Prostate gland (tissue), 2 donors: ENCODE measurements at regions of chr17 and their contacts with region 1.

Region 1: DNA sequence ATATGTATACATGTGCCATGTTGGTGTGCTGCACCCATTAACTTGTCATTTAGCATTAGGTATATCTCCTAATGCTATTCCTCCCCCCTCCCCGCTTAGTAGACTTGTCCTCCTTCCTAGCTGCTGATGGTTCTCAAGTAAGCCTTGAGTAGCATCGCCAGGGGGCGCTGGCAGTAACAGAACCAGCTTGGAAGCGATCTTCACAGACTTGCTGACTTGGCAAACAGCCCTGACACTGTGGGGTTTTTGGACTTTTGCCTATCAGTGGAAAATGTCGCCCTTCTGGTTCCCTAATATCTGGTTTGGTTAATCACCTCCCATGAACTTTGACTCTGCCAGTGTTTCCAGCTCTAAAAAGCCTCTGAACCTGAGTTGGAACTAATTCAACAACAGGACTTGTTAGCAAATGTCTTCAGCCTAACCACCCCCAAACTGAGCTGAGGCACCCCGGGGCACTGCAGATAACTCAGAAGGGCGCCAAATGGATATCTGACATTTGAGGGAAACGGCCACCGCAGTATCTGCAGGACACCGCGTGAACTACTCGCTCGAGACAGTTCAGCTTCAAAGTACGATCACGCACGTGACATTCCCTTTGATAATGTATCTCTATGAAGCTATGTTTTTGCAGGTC is 15.4 kb upstream of the SPATA32 start:
- DNase-seq: peak; percentile 93
- H3K4me3 ChIP-seq: no peak overlapping the region
- H3K27ac ChIP-seq: peak overlapping the region; percentile 7 to 61
- H3K4me1 ChIP-seq: peaks cover 5% of the 10 kb centered on the region
- H3K27me3 ChIP-seq: no peaks in the 10 kb centered on the region
- CTCF ChIP-seq: peak; percentile 62 to 94 (median 88)
- POLR2A ChIP-seq: no peak

Region 2: GRCh38 chr17:44758414-44759085 is 518.8 kb before region 1 on chr17 and contains the start of gene ADAM11:
- intact Hi-C with region 1: no loop called
- DNase-seq: no peak
- H3K4me3 ChIP-seq: peak within 1 kb of the TSS; percentile 31 to 42
- H3K27ac ChIP-seq: no peak within 1 kb of the TSS
- H3K4me1 ChIP-seq: peaks cover 4% of the 10 kb centered on the region
- H3K27me3 ChIP-seq: peaks cover 2% of the 10 kb centered on the region
- CTCF ChIP-seq: no peak
- POLR2A ChIP-seq: no peak
- total RNA-seq, gene ADAM11: 0.64 to 3.5 TPM

Region 3: GRCh38 chr17:45218895-45219661 is 58.3 kb before region 1 on chr17:
- intact Hi-C with region 1: loop called (anchors 2 kb)
- DNase-seq: peak; percentile 85
- H3K4me3 ChIP-seq: no peak overlapping the region
- H3K27ac ChIP-seq: no peak overlapping the region
- H3K4me1 ChIP-seq: no peaks in the 10 kb centered on the region
- H3K27me3 ChIP-seq: no peaks in the 10 kb centered on the region
- CTCF ChIP-seq: peak; percentile 94 to 98 (median 98)
- POLR2A ChIP-seq: no peak

Region 4: GRCh38 chr17:45317112-45317928 is 40.0 kb after region 1 on chr17:
- intact Hi-C with region 1: loop called (anchors 2 kb)
- DNase-seq: peak; percentile 100
- H3K4me3 ChIP-seq: peak overlapping the region; percentile 73 to 86
- H3K27ac ChIP-seq: peak overlapping the region; percentile 71 to 96
- H3K4me1 ChIP-seq: peaks cover 22% of the 10 kb centered on the region
- H3K27me3 ChIP-seq: no peaks in the 10 kb centered on the region
- CTCF ChIP-seq: no peak
- POLR2A ChIP-seq: no peak

Region 5: GRCh38 chr17:45385331-45385997 is 108.1 kb after region 1 on chr17:
- intact Hi-C with region 1: loop called (anchors 1 kb)
- DNase-seq: peak; percentile 83
- H3K4me3 ChIP-seq: no peak overlapping the region
- H3K27ac ChIP-seq: no peak overlapping the region
- H3K4me1 ChIP-seq: no peaks in the 10 kb centered on the region
- H3K27me3 ChIP-seq: no peaks in the 10 kb centered on the region
- CTCF ChIP-seq: peak; percentile 98 to 99 (median 98)
- POLR2A ChIP-seq: no peak